Heart left ventricle (tissue), 16 donors: ENCODE measurements at regions of chr17 and their contacts with region 1.

Region 1: DNA sequence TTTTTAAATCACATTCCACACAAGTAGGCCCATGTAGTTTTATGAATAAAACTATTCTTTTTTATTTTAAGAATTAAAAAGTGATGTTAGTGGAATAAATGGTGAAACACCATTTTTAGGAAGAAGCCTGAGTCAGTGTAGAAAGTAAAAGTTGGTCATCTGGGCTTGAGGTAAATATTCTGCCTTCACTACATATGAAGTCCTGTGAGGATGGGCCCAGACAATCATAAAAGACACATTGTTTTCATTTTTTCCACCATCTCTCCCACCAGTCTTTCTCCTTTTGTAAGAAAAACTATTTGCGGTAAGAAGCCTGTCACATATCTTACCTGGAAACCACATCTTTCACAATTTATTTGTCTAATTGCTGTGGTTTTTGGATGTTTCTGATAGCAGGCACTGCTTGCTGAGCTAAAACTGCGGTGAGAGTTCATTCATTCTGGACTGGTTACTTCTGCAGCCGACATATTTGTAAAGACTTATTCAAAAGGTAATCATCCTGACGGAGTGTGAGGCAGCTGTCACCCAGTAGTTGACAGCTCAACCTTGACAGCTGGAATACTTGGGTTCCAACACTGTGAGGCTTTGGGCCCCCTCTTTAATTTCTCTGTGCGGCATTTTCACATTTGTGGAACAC is 10.6 kb upstream of the RFFL start:
- DNase-seq: no peak
- ATAC-seq: no peak
- H3K4me3 ChIP-seq: no peak overlapping the region
- H3K27ac ChIP-seq: no peak overlapping the region
- H3K4me1 ChIP-seq: peaks cover 0 to 41% (median 0%) of the 10 kb centered on the region in 12 donors
- H3K27me3 ChIP-seq: no peaks in the 10 kb centered on the region
- CTCF ChIP-seq: no peak
- POLR2A ChIP-seq: no peak

Region 2: GRCh38 chr17:35028531-35029262 is 45.4 kb before region 1 on chr17:
- intact Hi-C with region 1: loop called in 1 of 10 experiments (anchors 5 kb)
- DNase-seq: no peak
- ATAC-seq: no peak
- H3K4me3 ChIP-seq: no peak overlapping the region
- H3K27ac ChIP-seq: no peak overlapping the region
- H3K4me1 ChIP-seq: peaks cover 0 to 18% (median 0%) of the 10 kb centered on the region in 12 donors
- H3K27me3 ChIP-seq: no peaks in the 10 kb centered on the region
- CTCF ChIP-seq: no peak
- POLR2A ChIP-seq: no peak